Sigmoid colon (tissue), 7 donors: ENCODE measurements at regions of chr1 and their contacts with region 1.

Region 1: DNA sequence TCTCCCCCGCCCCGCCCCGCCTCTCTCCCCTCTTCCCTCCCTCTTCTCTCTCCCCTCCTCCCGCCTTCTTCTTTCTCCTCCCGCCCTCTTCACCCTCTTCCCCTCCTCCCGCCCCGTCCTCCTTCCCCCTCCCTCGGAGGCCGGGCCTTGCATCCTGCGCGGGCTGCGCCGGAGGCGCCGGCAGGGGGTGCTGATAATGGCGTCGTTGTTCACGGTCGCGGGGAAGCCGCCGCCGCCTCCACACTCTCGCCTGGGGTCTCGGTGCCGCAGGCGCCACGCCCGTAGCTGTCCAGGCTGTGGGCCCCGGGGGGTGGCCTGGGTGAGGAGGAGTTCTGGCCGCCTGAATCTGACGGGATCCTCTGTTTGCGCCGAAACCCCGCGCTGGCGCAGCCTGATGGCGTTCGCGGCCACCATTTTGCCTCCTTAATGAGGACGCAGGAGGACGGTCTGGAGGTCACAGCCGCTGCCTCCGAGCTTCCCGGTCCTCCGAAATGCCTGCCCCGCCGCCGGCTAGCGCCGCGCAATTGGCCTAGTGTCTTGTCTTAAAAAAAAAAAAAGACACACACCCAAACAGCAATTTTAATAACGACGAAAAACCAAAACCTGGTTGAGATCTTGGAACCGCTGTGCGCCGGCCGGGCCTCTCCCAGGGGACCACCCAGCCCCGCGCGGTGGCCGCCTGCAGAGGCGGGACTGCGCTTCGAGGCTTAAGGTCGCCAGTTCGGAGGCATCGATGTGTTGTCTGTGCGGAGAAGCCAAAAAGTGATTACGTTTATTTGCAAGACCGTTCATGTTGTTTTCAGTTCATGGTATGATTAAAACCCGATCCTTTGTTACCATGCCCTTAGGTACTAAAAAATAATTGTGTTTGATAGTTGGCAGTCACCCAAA is 106.6 kb upstream of the HNRNPU start:
- DNase-seq: peak; percentile 97
- H3K4me3 ChIP-seq: peak overlapping the region; percentile 64 to 89 (median 87)
- H3K27ac ChIP-seq: peak overlapping the region; percentile 99 to 100 (median 100)
- H3K4me1 ChIP-seq: peaks cover 0 to 28% (median 22%) of the 10 kb centered on the region in 4 donors
- H3K27me3 ChIP-seq: no peaks in the 10 kb centered on the region
- CTCF ChIP-seq: peak; percentile 57 to 73 (median 58)
- EP300 ChIP-seq: no peak
- POLR2A ChIP-seq: peak; percentile 55 to 65

Region 2: DNA sequence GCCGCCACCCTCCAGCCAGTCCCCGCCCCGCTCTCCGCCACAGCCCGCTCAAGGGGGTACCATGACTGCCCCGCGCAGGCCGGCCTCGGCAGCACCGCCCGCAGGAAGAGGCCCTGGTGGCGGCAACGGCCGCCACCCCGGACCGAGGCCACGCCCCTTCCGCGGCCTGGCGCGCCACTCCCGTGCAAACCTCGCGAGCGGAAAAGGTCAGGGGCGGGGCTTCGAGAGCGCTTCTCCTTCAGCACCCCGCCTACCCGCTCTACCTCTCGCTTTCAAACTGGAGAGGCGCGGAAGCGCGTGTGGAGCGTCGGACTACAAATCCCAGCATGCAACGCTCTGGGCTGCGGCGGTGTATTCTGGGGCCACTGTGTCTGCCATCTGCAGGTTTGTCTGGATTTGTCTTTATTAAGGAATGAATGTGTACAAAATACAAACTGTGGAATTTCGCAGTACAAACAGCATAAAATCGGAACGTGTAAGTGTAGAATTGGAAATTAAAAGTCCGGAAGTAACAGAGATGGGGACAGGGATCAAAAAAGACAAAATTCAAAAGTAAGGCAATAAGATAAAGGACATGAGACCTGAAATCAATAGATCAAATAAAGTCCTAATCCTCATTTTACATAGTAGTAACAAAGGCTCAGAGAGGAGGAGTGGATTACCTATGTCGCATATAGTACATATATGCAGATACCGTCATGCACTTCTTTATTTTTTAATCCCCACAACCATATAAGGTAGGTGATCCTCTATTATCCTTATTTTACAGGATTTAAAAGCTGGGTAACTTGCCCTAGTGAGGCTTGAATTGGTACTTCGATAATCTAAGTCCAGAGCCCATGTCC is 518.7 kb before region 1 on chr1:
- intact Hi-C with region 1: loop called (anchors 5 kb)
- DNase-seq: peak; percentile 99
- H3K4me3 ChIP-seq: peak overlapping the region; percentile 76 to 94 (median 88)
- H3K27ac ChIP-seq: peak overlapping the region; percentile 93 to 99 (median 97)
- H3K4me1 ChIP-seq: peaks cover 0 to 40% (median 33%) of the 10 kb centered on the region in 4 donors
- H3K27me3 ChIP-seq: no peaks in the 10 kb centered on the region
- CTCF ChIP-seq: peak in 1 of 4 experiments; percentile 39
- EP300 ChIP-seq: no peak
- POLR2A ChIP-seq: no peak

Region 3: DNA sequence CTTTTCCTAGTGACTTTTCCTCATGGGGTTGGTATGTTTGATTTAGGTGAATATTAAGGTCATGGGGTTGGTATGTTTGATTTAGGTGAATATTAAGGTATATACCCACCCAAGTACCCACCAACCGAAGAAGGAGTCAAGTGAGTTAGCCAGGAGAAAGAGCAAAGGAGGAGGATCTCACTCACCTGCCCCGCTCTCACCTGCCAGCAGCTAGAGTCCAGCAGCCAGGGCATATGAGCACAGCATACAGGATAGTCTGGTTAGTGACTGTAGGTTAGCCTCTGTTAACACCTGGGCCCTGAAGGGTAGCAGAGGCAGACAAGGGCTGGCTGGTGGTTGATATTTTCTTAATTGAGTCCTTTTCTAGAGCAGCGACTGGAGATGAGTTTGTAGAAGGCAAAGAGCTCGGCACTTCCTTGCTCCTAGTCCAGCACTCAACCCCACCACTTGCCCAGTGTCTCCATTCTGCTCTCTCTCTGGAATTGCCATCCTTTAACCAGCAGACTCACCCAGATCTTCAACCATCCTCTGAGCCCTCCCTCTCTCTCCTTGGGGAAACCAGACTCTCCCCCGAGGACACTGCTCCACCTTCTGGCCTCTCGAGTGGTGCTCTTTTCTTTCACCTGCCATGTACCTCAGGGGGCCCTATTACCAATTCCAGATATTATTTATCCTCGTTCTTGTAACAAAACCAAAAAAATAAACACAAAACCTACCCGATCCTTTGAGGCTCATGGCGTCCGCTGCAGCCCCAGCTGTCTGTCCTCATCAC is 334.2 kb before region 1 on chr1:
- intact Hi-C with region 1: no loop called
- DNase-seq: no peak
- H3K4me3 ChIP-seq: no peak overlapping the region
- H3K27ac ChIP-seq: no peak overlapping the region
- H3K4me1 ChIP-seq: no peaks in the 10 kb centered on the region
- H3K27me3 ChIP-seq: no peaks in the 10 kb centered on the region
- CTCF ChIP-seq: no peak
- EP300 ChIP-seq: no peak
- POLR2A ChIP-seq: no peak

Region 4: DNA sequence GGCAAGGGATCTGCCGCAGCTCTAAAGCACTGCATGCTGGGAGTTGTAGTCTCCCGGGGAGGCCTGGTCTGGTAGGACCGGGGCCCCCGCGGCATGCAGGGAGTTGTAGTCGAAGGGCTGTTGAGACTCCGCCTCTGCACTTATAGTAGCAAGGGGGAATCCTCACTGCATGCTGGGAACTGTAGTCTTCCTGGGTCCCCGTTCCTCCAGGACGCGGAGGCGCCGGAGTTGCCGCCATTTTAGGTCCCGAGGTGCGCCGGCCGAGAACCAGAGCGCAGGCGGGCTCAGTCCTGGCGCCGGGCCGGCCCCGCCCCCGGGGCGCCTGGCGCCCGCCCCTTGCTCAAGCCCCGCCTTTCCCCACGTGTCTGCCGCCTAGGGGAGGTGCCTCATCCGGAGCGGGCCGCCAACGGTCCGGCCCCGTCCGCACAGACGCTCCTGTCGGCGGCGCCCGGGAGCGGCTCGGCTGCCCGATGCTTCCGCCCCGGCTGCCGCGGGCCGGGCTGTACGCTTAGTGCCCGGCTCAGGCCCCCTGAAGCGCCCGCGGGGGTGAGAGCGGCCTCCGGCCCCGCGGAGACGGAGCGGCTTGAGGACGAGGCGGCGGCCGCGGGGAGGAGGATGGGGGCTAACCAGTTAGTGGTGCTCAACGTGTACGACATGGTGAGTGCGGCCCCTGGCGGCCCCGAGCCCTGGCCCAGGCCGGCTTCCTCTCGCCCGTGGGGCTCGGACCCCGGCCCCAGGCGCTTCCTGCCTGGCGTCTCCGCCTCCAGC is 318.0 kb before region 1 on chr1 and contains the start of gene DESI2:
- intact Hi-C with region 1: loop called (anchors 1 kb)
- DNase-seq: peak; percentile 100
- H3K4me3 ChIP-seq: peak within 1 kb of the TSS; percentile 78 to 92 (median 86)
- H3K27ac ChIP-seq: peak within 1 kb of the TSS; percentile 83 to 98 (median 97)
- H3K4me1 ChIP-seq: peaks cover 0 to 32% (median 29%) of the 10 kb centered on the region in 4 donors
- H3K27me3 ChIP-seq: no peaks in the 10 kb centered on the region
- CTCF ChIP-seq: peak in 3 of 4 experiments; percentile 14 to 62 (median 42)
- EP300 ChIP-seq: no peak
- POLR2A ChIP-seq: peak; percentile 27 to 66
- total RNA-seq, gene DESI2: 34.2 to 37.3 (median 36.9) TPM

Region 5: DNA sequence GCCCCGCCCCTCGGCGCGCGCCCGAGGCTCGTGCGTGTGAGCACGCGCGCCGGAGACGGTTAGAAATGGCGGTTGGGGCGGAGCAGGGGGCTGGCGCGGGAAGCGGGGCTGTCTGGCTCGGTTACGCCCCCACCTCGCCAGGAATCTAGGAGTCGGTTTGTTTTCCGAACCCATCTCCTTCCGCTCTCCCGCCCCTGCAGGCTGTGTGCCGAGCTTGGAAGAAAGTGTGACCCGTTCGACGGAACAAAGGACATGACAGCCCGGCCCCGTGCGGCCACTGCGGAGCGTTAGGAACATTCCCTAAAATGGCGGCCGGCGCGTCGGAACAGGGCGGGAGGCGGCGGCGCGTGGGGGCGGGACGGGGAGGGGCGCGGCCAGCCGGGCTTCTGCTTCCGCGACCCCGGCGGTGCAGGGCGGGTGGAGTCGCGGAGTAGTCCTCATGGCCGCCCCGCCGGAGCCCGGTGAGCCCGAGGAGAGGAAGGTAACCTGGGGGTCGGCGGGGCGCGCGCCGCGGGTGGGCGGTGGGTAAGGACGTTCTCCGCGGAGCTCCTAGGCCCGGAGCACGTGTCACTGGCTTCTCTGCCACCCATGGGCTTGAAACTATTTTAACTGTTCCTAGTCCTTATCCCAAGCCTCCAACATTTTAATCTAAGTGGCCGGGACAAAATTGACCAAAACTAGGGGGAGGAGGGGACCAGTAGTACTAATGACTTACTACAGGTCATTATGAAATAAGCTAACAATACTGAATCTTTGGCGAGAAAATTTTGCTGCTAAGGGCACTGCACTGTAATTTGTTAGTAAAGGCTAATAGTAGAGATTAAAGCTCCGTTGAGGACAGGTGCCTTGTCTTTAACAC is 135.4 kb before region 1 on chr1 and contains the start of gene COX20:
- intact Hi-C with region 1: loop called (anchors 1 kb)
- DNase-seq: peak; percentile 96
- H3K4me3 ChIP-seq: peak within 1 kb of the TSS; percentile 70 to 81 (median 76)
- H3K27ac ChIP-seq: peak within 1 kb of the TSS; percentile 98 to 100 (median 99)
- H3K4me1 ChIP-seq: peaks cover 0 to 56% (median 47%) of the 10 kb centered on the region in 4 donors
- H3K27me3 ChIP-seq: no peaks in the 10 kb centered on the region
- CTCF ChIP-seq: no peak
- EP300 ChIP-seq: peak in 1 of 4 donors; percentile 50
- POLR2A ChIP-seq: peak; percentile 42 to 45
- total RNA-seq, gene COX20: 59.7 to 132 (median 79.9) TPM

Region 6: DNA sequence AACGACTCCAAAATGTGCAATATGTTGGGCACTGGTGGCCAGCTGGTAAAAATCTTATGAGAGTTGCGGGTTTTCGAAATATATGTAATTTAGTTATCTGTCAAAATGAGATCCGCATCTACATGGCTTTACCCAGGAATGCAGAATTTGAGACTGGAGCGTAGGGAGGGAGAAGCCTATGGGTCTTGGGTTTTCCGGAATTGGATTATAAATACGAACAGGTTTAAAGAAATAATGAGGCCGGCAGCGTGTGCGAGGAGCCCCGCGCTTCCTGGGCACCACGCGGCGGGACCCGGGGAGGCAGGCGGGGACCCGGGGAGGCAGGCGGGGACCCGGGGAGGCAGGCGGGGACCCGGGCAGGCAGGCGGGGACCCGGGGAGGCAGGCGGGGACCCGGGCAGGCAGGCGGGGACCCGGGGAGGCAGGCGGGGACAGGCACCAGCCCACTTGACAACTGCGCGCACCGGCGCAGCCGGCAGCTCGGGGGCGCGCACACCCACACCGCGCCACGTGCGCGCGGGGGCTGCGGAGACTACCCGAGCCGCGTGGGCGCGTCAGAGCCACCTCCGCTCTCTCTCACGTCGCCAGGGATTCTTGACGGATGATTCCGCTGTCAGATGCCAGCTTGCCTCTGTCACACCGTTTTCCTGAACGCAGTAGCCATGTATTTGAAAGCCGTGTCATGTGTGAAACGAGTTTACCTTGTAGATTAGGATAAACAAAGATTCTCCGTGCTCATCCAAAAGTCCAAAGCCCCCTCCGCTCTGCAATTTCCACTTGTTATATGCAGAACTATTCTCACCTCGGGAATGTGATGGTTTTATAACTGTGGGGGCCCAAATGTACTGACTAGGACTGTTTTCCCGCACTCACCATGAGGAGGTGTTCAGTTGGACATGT is 52.2 kb before region 1 on chr1:
- intact Hi-C with region 1: loop called (anchors 5 kb)
- DNase-seq: peak; percentile 59
- H3K4me3 ChIP-seq: peak overlapping the region; percentile 27 to 64 (median 49)
- H3K27ac ChIP-seq: peak overlapping the region in 2 of 4 donors; percentile 20 to 22
- H3K4me1 ChIP-seq: peaks cover 0 to 9% (median 7%) of the 10 kb centered on the region in 4 donors
- H3K27me3 ChIP-seq: no peaks in the 10 kb centered on the region
- CTCF ChIP-seq: no peak
- EP300 ChIP-seq: no peak
- POLR2A ChIP-seq: no peak

Region 7: GRCh38 chr1:245045087-245045881 is 74.4 kb after region 1 on chr1:
- intact Hi-C with region 1: loop called (anchors 2 kb)
- DNase-seq: no peak
- H3K4me3 ChIP-seq: no peak overlapping the region
- H3K27ac ChIP-seq: peak overlapping the region in 1 of 4 donors; percentile 4
- H3K4me1 ChIP-seq: peaks cover 0 to 7% (median 0%) of the 10 kb centered on the region in 4 donors
- H3K27me3 ChIP-seq: no peaks in the 10 kb centered on the region
- CTCF ChIP-seq: no peak
- EP300 ChIP-seq: no peak
- POLR2A ChIP-seq: no peak

Region 8: DNA sequence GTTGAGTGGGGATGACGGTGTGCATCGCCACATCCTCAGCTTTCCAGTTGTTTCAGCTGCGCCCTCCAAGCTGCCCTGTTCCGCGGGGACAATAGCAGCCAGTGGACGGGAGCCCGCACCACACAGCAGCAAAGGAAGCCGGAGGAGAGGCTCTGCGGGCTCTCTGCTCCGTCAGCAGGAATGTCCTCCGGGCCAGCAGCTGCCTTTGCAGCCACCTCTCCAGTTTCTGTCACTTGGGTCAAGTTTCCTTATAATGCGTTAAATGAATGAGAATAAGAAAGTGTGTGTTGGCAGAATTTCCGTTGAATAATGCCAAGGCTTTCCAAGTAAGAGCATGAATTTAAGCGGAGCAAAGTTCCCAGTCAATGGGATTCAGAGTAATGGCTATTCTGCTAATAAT is 447.2 kb after region 1 on chr1:
- intact Hi-C with region 1: no loop called
- DNase-seq: no peak
- H3K4me3 ChIP-seq: no peak overlapping the region
- H3K27ac ChIP-seq: no peak overlapping the region
- H3K4me1 ChIP-seq: no peaks in the 10 kb centered on the region
- H3K27me3 ChIP-seq: no peaks in the 10 kb centered on the region
- CTCF ChIP-seq: no peak
- EP300 ChIP-seq: no peak
- POLR2A ChIP-seq: no peak